Dorsolateral prefrontal cortex (tissue), 120 donors: ENCODE measurements at regions of chr9 and their contacts with region 1.

Region 1: DNA sequence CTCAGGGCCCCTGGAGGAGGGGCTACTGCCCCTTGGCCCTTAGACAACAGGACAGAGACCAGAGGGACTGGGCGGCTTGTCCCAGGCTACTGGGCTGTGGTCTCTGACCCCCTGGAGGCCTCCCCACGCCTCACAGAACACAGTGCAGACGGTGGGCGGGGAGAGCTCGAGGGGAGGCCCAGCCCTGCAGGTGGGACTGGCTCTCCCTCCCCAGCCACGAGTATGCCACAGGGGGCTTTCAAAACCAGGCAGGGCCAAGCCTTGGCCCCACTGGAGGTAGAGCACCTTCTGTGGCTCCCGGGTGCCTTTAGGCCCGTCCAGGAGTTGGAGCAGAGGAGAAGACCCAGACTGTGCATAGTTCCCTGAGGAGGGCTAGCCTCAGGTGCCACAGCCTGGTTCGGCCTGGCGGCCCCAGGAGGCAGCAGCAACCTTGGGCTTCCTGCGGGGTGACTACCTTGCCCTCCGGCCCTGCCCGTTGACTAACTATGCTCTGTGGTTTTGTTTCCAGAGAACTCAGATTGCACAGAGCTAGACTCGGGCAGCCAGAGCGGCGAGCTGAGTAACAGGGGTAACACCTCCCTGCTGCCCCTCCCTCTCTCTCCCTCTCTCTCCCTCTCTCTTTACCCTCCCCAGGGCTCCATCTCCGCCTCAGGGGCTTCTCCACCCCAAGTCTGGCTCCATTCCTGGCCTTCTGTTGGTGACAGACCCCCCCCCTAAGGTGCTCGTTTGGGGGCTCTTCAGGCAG is 15.5 kb downstream of the CARD19 start:
- DNase-seq: peak in 4 of 10 donors; percentile 21 to 42 (median 32)
- H3K4me3 ChIP-seq: no peak overlapping the region
- H3K27ac ChIP-seq: peak overlapping the region in 4 of 59 donors; percentile 18 to 41 (median 26)
- H3K27me3 ChIP-seq: no peaks in the 10 kb centered on the region
- CTCF ChIP-seq: no peak

Region 2: DNA sequence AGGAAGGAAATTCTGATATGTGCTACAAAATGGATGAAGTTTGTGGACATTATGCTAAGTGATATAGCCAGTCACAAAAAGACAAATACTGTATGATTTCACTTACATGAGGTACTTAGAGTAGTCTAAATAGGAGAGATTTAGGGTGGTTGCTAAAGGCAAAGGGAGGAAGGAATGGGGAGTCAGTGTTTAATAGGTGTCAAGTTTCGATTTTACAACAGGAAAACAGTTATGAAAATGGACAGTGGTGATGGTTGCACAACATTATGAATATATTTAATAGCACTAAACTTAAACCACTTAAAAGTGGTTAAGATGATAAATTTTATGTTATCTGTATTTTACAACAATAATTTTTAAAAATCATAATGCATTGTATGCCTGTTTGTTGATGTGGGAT is 535.4 kb before region 1 on chr9:
- intact Hi-C with region 1: no loop called
- DNase-seq: no peak
- H3K4me3 ChIP-seq: no peak overlapping the region
- H3K27ac ChIP-seq: no peak overlapping the region
- H3K27me3 ChIP-seq: no peaks in the 10 kb centered on the region
- CTCF ChIP-seq: no peak

Region 3: GRCh38 chr9:93095205-93096130 is 16.1 kb before region 1 on chr9:
- intact Hi-C with region 1: no loop called
- DNase-seq: peak; percentile 99 to 100 (median 99)
- H3K4me3 ChIP-seq: peak overlapping the region; percentile 48 to 100 (median 95)
- H3K27ac ChIP-seq: peak overlapping the region; percentile 36 to 97 (median 93)
- H3K27me3 ChIP-seq: no peaks in the 10 kb centered on the region
- CTCF ChIP-seq: peak in 4 of 56 donors; percentile 3 to 28 (median 12)

Region 4: GRCh38 chr9:93159601-93160471 is 48.3 kb after region 1 on chr9:
- intact Hi-C with region 1: loop called (anchors 2 to 10 kb)
- DNase-seq: peak; percentile 75 to 89 (median 78)
- H3K4me3 ChIP-seq: peak overlapping the region in 1 of 59 donors; percentile 16
- H3K27ac ChIP-seq: no peak overlapping the region
- H3K27me3 ChIP-seq: no peaks in the 10 kb centered on the region
- CTCF ChIP-seq: peak; percentile 71 to 98 (median 92)

Region 5: DNA sequence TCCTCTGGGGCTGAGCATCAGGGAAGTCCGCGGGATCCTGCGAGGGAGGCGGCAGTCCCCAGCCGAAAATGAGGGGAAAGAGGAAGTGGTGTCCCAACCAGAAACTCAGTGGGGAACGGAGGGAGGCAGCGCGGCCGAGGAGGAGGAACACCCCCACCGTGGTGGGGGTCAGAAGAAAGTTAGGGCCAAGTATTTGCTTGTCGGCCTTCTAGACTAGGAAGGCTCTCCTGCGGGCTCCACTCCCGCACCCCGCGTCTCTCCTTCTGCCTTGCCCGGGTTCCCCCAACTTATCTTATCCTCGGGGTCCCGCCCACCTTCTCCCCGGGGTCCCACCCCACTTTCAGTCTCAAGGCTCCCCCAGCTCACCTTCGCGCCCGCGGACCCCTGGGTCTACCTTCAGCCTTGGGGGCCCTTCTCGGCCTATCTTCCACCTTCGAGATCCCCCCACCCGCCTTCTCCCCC is 464.3 kb after region 1 on chr9:
- intact Hi-C with region 1: no loop called
- DNase-seq: peak in 3 of 10 donors; percentile 33 to 57 (median 49)
- H3K4me3 ChIP-seq: peak overlapping the region; percentile 61 to 94 (median 78)
- H3K27ac ChIP-seq: peak overlapping the region in 58 of 59 donors; percentile 7 to 93 (median 80)
- H3K27me3 ChIP-seq: no peaks in the 10 kb centered on the region
- CTCF ChIP-seq: no peak